Activated CD4-positive, alpha-beta T cell treated with anti-CD3 and anti-CD28 coated beads, Interleukin-2, amount 10 ng/mL, durations not matched to agents 24 days and 14 days (primary cell): ENCODE measurements at regions of chr12 and their contacts with region 1.

Region 1: DNA sequence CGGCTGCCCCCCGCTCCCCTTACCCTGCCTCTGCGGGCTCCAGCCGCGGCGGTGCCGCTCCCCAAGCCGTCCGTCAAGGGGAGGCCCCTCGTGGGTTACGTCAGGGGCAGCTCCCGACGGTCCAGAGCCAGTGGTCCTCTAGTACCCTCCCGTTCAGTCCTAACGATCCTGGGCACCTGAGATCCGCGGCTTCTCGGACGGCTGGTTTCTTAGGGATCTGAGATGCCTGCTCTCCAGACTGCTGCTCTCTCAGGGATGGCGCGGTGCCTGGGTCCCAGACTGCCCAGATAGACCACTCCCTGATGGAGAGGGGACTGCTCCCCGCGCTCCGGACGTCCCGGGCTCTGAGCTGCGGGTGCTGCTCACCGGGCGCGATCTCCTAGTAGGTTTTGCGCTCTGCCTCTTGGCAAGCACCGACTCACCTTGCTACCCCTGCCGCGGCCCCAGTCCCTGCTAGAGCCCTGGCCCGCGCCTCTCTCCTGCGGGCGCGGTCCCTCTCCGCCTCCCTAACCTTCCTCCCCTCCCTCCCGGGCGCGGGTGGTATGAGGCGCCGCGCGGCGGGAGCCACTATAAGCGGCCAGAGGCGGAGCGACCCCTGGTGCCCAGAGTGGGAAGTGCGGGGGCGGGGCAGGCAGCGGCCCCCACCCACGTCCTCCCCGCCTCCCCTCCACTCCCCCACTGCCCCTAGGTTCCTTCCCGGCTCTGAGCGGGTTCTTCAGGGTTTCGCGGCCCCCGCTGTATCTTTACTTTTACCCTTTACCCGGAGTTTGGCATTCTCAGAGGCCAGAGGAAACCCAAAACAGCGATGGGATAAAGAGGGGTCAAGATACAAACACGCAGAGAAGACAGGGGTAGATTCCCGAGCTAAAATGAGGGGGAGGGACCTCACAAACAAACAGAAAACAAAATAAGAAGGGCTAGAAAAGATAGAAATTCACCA is at the start of gene C1QL4:
- DNase-seq: peak; percentile 97
- H3K4me3 Mint-ChIP-seq: peak within 1 kb of the TSS; percentile 69
- H3K27ac Mint-ChIP-seq: no peak within 1 kb of the TSS
- H3K4me1 Mint-ChIP-seq: peaks cover 19% of the 10 kb centered on the region
- H3K27me3 Mint-ChIP-seq: peaks cover 85% of the 10 kb centered on the region
- total RNA-seq, gene C1QL4: not detected in 2 replicates

Region 2: GRCh38 chr12:49296836-49297694 is 39.9 kb before region 1 on chr12:
- intact Hi-C with region 1: loop called (anchors 1 kb)
- DNase-seq: peak; percentile 77
- H3K4me3 Mint-ChIP-seq: peak overlapping the region; percentile 75
- H3K27ac Mint-ChIP-seq: no peak overlapping the region
- H3K4me1 Mint-ChIP-seq: peaks cover 27% of the 10 kb centered on the region
- H3K27me3 Mint-ChIP-seq: peaks cover 58% of the 10 kb centered on the region

Region 3: GRCh38 chr12:49347384-49348237 is 10.7 kb after region 1 on chr12:
- intact Hi-C with region 1: loop called (anchors 1 kb)
- DNase-seq: peak; percentile 94
- H3K4me3 Mint-ChIP-seq: peak overlapping the region; percentile 84
- H3K27ac Mint-ChIP-seq: peak overlapping the region; percentile 67
- H3K4me1 Mint-ChIP-seq: peaks cover 30% of the 10 kb centered on the region
- H3K27me3 Mint-ChIP-seq: peaks cover 66% of the 10 kb centered on the region

Region 4: GRCh38 chr12:49400304-49400703 is 63.4 kb after region 1 on chr12:
- intact Hi-C with region 1: no loop called
- DNase-seq: no peak
- H3K4me3 Mint-ChIP-seq: no peak overlapping the region
- H3K27ac Mint-ChIP-seq: no peak overlapping the region
- H3K4me1 Mint-ChIP-seq: peaks cover 8% of the 10 kb centered on the region
- H3K27me3 Mint-ChIP-seq: peaks cover 2% of the 10 kb centered on the region